ENCODE measurements at regions of chr18 and their contacts with region 1.

Region 1: GRCh38 chr18:79380816-79381806 is 14.6 kb upstream of the NFATC1 start:
- DNase-seq: peak; percentile 88
- ATAC-seq: peak; percentile 49

Region 2: GRCh38 chr18:79317718-79318117 is 63.4 kb before region 1 on chr18:
- intact Hi-C with region 1: no loop called
- DNase-seq: no peak
- ATAC-seq: no peak

Region 3: DNA sequence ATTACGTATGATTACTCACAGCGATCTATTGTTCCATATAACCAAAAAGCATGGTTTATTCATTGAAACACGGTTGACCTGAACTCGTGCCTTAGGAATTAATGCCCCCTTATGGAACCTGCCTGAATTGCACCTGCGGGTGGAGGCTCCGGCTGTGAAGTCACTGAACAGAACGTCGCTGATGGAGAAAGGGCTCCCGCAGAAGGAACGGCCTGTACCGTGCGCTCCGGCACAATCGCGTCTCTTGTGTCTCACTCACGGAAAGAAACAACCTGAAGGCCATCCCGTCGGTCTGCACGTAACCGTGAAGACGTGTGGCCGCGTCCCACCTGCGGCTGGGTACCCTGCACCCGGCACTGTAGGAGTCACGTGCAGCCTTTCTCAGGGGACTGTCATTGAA is 147.7 kb after region 1 on chr18:
- intact Hi-C with region 1: loop called (anchors 5 kb)
- DNase-seq: peak; percentile 84
- ATAC-seq: peak; percentile 69

Region 4: DNA sequence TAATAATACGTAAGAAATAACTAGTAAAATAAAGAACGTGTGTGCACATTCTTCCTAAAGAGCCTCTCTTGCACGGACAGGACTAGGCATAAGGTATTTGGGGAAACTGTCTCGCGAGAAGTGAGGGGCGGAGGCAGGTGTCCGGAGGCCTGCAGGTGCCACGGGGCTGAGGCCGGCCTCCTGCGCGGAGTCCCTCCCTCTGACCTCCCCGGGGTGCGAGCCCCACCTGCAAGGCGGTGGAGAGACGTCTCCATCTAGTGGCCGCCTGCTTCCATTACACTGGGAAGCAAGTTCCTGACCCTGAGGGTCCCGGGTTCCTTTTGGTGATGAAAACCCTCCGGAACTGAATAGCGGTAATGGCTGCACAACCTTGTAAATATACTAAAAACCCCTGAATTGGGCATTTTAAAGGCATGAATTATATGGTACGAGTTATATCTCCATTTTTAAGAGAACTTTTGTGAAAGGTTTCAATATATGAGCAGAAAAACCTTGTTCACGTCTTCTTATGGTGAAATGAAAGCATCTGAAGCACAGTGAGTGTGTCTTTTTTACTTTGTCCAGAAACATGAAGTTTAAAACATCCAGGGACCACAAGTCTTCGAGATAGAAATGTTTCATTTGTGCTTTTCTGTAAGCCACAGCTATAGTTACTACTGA is 263.0 kb after region 1 on chr18:
- intact Hi-C with region 1: loop called (anchors 5 kb)
- DNase-seq: peak; percentile 83
- ATAC-seq: peak; percentile 84